GM12878 (cell line): ENCODE measurements at regions of chr5 and their contacts with region 1.

Region 1: DNA sequence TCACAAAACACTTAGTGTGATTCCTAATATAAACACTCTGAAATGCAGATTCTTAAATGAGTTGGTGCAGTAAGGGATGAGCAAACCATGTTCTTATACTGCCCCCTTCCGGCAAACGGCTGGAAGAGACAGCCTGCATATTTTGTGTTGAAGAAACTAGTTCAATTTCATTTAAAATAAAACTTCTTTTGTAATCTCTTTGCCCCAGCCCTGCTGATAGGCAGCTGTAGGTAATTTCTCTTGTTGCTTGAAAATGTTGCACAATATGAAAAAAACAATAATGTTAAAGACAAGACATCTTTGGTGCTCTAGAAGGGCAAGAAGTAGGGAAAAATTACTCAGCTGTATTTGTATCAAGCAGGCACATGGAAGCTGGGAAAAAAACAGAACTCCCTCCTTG is 89.7 kb upstream of the CCNG1 start:
- DNase-seq: peak; percentile 21
- ATAC-seq: peak; percentile 88
- H3K4me3 ChIP-seq: no peak overlapping the region
- H3K27ac ChIP-seq: no peak overlapping the region
- H3K4me1 ChIP-seq: no peaks in the 10 kb centered on the region
- H3K27me3 ChIP-seq: no peaks in the 10 kb centered on the region
- CTCF ChIP-seq: peak; percentile 71 to 91 (median 83); a peak in 5 of 6 replicates
- EP300 ChIP-seq: no peak
- POLR2A ChIP-seq: no peak
- RAD21 ChIP-seq: peak; percentile 97

Region 2: GRCh38 chr5:161544350-161544765 is 1803.3 kb before region 1 on chr5:
- CTCF ChIA-PET with region 1: interaction called, 23 read pairs
- POLR2A ChIA-PET with region 1: no interaction called
- RAD21 ChIA-PET with region 1: interaction called, 8 read pairs
- SMC1A ChIA-PET with region 1: interaction called, 8 read pairs
- in situ Hi-C with region 1: loop called (anchors 10 kb)
- intact Hi-C with region 1: loop called (anchors 2 kb)
- DNase-seq: no peak
- ATAC-seq: peak; percentile 66
- H3K4me3 ChIP-seq: no peak overlapping the region
- H3K27ac ChIP-seq: no peak overlapping the region
- H3K4me1 ChIP-seq: no peaks in the 10 kb centered on the region
- H3K27me3 ChIP-seq: peaks cover 3 to 8% of the 10 kb centered on the region in 2 experiments; a peak in 2 of 4 replicates
- CTCF ChIP-seq: peak; percentile 75 to 94 (median 90)
- EP300 ChIP-seq: no peak
- POLR2A ChIP-seq: no peak
- RAD21 ChIP-seq: peak; percentile 64

Region 3: DNA sequence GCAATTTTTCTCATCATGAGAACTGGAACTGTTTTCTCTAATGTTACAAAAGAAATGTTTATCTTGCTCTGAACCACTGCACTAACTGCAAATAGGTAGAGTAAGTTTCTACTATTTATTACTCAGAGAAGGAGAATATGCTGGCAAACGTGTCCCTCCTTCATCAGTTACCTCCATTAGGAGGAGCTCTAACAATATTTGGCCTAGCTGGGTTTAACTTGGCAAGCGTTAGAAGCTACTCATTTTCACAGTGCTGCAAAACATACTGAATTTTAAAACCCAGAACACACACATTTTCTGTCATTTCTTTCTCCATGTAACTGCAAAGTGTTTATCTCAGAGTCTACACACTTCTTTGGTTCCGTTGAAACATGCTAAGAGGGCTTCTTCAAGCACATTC is 1381.1 kb before region 1 on chr5:
- CTCF ChIA-PET with region 1: interaction called, 12 read pairs
- POLR2A ChIA-PET with region 1: no interaction called
- RAD21 ChIA-PET with region 1: interaction called, 4 read pairs
- SMC1A ChIA-PET with region 1: interaction called, 13 read pairs
- in situ Hi-C with region 1: no loop called
- intact Hi-C with region 1: loop called (anchors 5 kb)
- DNase-seq: no peak
- ATAC-seq: peak; percentile 71
- H3K4me3 ChIP-seq: no peak overlapping the region
- H3K27ac ChIP-seq: no peak overlapping the region
- H3K4me1 ChIP-seq: no peaks in the 10 kb centered on the region
- H3K27me3 ChIP-seq: no peaks in the 10 kb centered on the region
- CTCF ChIP-seq: peak; percentile 20 to 48 (median 44); a peak in 4 of 6 replicates
- EP300 ChIP-seq: no peak
- POLR2A ChIP-seq: no peak
- RAD21 ChIP-seq: peak; percentile 38

Region 4: GRCh38 chr5:162593881-162594280 is 753.8 kb before region 1 on chr5:
- CTCF ChIA-PET with region 1: no interaction called
- POLR2A ChIA-PET with region 1: no interaction called
- RAD21 ChIA-PET with region 1: no interaction called
- SMC1A ChIA-PET with region 1: interaction called, 3 read pairs
- in situ Hi-C with region 1: no loop called
- intact Hi-C with region 1: loop called (anchors 10 kb)
- DNase-seq: no peak
- ATAC-seq: peak; percentile 68
- H3K4me3 ChIP-seq: no peak overlapping the region
- H3K27ac ChIP-seq: no peak overlapping the region
- H3K4me1 ChIP-seq: no peaks in the 10 kb centered on the region
- H3K27me3 ChIP-seq: no peaks in the 10 kb centered on the region
- CTCF ChIP-seq: peak; percentile 27 to 36 (median 29); a peak in 3 of 6 replicates
- EP300 ChIP-seq: no peak
- POLR2A ChIP-seq: no peak
- RAD21 ChIP-seq: peak; percentile 32; the same call in 1 of the 2 replicates

Region 5: GRCh38 chr5:162824360-162824759 is 523.3 kb before region 1 on chr5:
- CTCF ChIA-PET with region 1: no interaction called
- POLR2A ChIA-PET with region 1: no interaction called
- RAD21 ChIA-PET with region 1: no interaction called
- SMC1A ChIA-PET with region 1: interaction called, 4 read pairs
- in situ Hi-C with region 1: no loop called
- intact Hi-C with region 1: loop called (anchors 10 kb)
- DNase-seq: no peak
- ATAC-seq: peak; percentile 94
- H3K4me3 ChIP-seq: no peak overlapping the region
- H3K27ac ChIP-seq: no peak overlapping the region
- H3K4me1 ChIP-seq: peaks cover 3% of the 10 kb centered on the region; the same call in 1 of the 2 replicates
- H3K27me3 ChIP-seq: no peaks in the 10 kb centered on the region
- CTCF ChIP-seq: no peak
- EP300 ChIP-seq: peak; percentile 82 to 88
- POLR2A ChIP-seq: no peak
- RAD21 ChIP-seq: no peak

Region 6: DNA sequence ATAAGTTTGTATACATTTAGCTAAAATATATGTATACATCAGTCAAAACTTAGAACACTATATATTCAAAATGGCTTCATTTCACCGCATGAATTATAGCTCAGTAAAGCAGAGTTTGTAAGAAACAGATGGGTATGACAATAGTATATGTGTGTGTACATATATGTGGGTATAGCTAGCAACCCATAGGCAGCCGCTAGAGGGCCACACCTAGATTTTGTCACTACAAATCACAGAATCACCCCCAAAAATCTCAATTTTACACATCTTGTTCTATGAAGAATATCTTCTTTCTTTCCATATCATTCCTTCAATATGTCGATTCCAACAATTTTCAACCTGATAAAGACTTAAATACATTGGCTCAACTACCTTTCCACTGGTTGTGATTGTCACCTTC is 268.1 kb before region 1 on chr5:
- CTCF ChIA-PET with region 1: interaction called, 17 read pairs
- POLR2A ChIA-PET with region 1: no interaction called
- RAD21 ChIA-PET with region 1: no interaction called
- SMC1A ChIA-PET with region 1: interaction called, 9 read pairs
- in situ Hi-C with region 1: no loop called
- intact Hi-C with region 1: loop called (anchors 1 kb)
- DNase-seq: no peak
- ATAC-seq: peak; percentile 87
- H3K4me3 ChIP-seq: no peak overlapping the region
- H3K27ac ChIP-seq: no peak overlapping the region
- H3K4me1 ChIP-seq: no peaks in the 10 kb centered on the region
- H3K27me3 ChIP-seq: no peaks in the 10 kb centered on the region
- CTCF ChIP-seq: peak; percentile 42 to 69 (median 55); a peak in 4 of 6 replicates
- EP300 ChIP-seq: no peak
- POLR2A ChIP-seq: no peak
- RAD21 ChIP-seq: peak; percentile 53

Region 7: GRCh38 chr5:163306421-163306820 is 41.2 kb before region 1 on chr5:
- CTCF ChIA-PET with region 1: interaction called, 12 read pairs
- POLR2A ChIA-PET with region 1: no interaction called
- RAD21 ChIA-PET with region 1: no interaction called
- SMC1A ChIA-PET with region 1: interaction called, 11 read pairs
- in situ Hi-C with region 1: no loop called
- intact Hi-C with region 1: no loop called
- DNase-seq: no peak
- ATAC-seq: peak; percentile 46; the same call in 2 of the 3 replicates
- H3K4me3 ChIP-seq: no peak overlapping the region
- H3K27ac ChIP-seq: no peak overlapping the region
- H3K4me1 ChIP-seq: no peaks in the 10 kb centered on the region
- H3K27me3 ChIP-seq: no peaks in the 10 kb centered on the region
- CTCF ChIP-seq: peak; percentile 31 to 37 (median 35); a peak in 4 of 6 replicates
- EP300 ChIP-seq: no peak
- POLR2A ChIP-seq: no peak
- RAD21 ChIP-seq: peak; percentile 30; the same call in 1 of the 2 replicates

Region 8: GRCh38 chr5:163649522-163649921 is 301.9 kb after region 1 on chr5:
- CTCF ChIA-PET with region 1: no interaction called
- POLR2A ChIA-PET with region 1: no interaction called
- RAD21 ChIA-PET with region 1: no interaction called
- SMC1A ChIA-PET with region 1: no interaction called
- in situ Hi-C with region 1: no loop called
- intact Hi-C with region 1: no loop called
- DNase-seq: no peak
- ATAC-seq: no peak
- H3K4me3 ChIP-seq: no peak overlapping the region
- H3K27ac ChIP-seq: no peak overlapping the region
- H3K4me1 ChIP-seq: no peaks in the 10 kb centered on the region
- H3K27me3 ChIP-seq: no peaks in the 10 kb centered on the region
- CTCF ChIP-seq: no peak
- EP300 ChIP-seq: no peak
- POLR2A ChIP-seq: no peak
- RAD21 ChIP-seq: no peak